Panc1 (cell line): ENCODE measurements at regions of chr18 and their contacts with region 1.

Region 1: DNA sequence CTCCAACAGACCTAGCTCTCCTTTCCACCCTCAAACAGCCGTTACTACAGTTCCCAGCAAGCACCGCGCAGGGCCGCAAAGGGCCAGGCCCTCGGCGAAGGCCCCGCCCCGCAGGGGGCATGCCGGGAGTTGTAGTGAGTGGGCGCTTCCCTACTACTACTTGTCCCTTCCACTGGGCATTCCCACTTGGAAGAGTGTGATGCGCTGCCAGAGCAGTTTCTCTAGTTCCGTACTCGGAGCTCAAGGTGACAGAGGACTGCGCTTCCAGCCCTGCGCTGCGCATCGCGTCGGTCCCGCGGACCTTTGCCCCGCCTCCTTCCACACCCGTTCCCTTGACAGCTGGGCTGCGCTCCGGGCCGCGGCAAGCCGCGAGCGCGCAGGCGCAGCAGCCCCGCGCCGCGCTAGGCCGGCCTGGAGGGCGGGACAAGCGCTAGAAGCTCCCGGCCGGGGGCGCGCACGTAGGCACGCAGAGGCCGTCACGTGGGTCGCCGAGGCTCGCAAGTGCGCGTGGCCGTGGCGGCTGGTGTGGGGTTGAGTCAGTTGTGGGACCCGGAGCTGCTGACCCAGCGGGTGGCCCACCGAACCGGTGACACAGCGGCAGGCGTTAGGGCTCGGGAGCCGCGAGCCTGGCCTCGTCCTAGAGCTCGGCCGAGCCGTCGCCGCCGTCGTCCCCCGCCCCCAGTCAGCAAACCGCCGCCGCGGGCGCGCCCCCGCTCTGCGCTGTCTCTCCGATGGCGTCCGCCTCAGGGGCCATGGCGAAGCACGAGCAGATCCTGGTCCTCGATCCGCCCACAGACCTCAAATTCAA is at the start of gene VAPA:
- DNase-seq: peak; percentile 82
- ATAC-seq: peak; percentile 91
- H3K4me3 ChIP-seq: peak within 1 kb of the TSS; percentile 83 to 94
- H3K27ac ChIP-seq: peak within 1 kb of the TSS; percentile 91
- H3K4me1 ChIP-seq: peaks cover 26% of the 10 kb centered on the region
- H3K27me3 ChIP-seq: no peaks in the 10 kb centered on the region
- CTCF ChIP-seq: no peak
- total RNA-seq, gene VAPA: 228 TPM

Region 2: DNA sequence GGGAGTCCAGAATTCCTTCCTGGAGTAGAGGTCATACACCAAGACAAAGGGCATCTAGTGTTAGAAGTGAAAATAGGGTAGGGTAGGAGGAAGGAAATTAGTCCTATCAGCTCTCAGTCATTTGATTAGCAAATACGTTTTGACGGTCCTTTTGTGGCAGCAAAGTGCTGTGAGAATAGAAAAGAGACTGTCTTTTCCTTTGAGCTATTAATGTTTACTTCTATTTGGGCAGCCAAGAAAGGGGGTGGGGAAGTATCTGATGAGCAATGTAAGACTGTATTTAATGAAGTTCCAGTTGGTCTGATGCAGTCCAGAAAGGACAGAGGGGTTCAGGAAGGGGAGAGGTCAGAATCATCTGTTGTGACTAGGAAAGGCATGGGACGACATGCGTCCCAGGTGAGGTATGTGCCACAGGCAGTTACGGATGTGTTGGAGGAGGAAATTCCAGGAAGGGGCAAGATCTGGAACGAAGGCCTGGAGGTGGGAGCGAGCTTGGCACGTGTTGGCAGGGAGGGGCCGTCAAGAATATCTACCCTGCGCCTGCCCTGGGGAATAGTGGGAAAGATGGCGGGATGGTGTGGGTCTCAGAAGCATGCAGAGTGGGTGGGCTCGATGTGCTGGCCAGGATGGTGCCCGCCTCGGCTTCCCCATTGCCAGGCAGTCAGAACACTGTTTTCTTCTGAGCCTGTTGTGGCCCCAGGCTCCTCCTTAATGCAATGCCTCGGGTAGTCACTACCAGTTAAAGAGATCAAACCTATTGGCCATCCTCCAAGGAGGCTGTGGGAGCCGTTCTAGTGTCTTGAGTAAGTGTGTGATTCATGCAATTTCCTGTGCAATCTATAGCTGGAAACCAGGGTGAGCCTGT is 85.9 kb before region 1 on chr18:
- CTCF ChIA-PET with region 1: no interaction called
- POLR2A ChIA-PET with region 1: no interaction called
- in situ Hi-C with region 1: no loop called
- intact Hi-C with region 1: loop called (anchors 10 kb)
- DNase-seq: peak; percentile 91
- ATAC-seq: peak; percentile 91
- H3K4me3 ChIP-seq: peak overlapping the region in 1 of 2 experiments; percentile 29; a peak in 2 of 4 replicates
- H3K27ac ChIP-seq: peak overlapping the region; percentile 73
- H3K4me1 ChIP-seq: peaks cover 64% of the 10 kb centered on the region
- H3K27me3 ChIP-seq: no peaks in the 10 kb centered on the region
- CTCF ChIP-seq: no peak